AG04449 (cell line): ENCODE measurements at regions of chr10 and their contacts with region 1.

Region 1: GRCh38 chr10:86399879-86400704 is 33.5 kb upstream of the GRID1 start:
- DNase-seq: peak; percentile 63
- H3K4me3 ChIP-seq: peak overlapping the region; percentile 69
- CTCF ChIP-seq: peak; percentile 98

Region 2: GRCh38 chr10:86217371-86218080 is 182.6 kb before region 1 on chr10:
- CTCF ChIA-PET with region 1: no interaction called
- POLR2A ChIA-PET with region 1: no interaction called
- DNase-seq: no peak
- H3K4me3 ChIP-seq: no peak overlapping the region
- CTCF ChIP-seq: no peak

Region 3: DNA sequence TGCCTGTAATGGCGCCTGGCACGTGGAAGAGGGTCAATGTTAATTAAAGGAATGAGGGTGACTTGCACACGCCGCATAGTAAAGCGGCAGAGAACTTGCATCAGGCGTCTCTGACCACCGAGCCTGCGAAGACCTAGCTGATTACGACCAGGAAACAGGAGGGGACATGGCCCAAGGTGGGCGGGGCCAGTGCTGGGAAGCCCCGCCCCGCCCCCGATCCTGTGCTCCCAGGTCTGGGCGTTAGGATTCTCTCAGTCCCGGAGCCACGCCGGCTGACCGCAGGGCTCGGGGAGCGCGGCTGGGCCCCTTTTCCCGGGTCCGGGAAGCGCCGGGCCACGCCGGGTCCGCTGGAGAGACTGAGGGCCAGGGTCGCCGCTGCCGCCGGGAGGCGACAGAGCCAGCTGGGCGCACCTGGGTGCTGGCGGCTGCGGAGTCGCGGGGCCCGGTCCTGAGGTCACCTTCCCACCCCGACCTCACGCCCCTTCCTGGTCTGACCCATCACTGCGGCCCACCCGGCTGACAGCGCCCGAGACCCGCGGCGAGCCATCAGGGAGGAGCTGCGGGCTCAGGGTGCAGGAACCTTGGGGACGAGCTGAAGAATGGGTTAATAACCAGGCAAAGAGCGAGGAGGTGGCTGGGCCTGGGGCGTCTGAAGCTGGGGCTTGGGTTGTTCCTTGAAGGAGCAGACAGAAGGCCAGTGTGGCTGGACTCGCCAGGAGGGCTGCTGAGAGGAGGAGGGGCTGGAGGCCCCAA is 10.5 kb before region 1 on chr10:
- CTCF ChIA-PET with region 1: interaction called, 24 read pairs
- POLR2A ChIA-PET with region 1: no interaction called
- DNase-seq: no peak
- H3K4me3 ChIP-seq: peak overlapping the region; percentile 36
- CTCF ChIP-seq: no peak

Region 4: DNA sequence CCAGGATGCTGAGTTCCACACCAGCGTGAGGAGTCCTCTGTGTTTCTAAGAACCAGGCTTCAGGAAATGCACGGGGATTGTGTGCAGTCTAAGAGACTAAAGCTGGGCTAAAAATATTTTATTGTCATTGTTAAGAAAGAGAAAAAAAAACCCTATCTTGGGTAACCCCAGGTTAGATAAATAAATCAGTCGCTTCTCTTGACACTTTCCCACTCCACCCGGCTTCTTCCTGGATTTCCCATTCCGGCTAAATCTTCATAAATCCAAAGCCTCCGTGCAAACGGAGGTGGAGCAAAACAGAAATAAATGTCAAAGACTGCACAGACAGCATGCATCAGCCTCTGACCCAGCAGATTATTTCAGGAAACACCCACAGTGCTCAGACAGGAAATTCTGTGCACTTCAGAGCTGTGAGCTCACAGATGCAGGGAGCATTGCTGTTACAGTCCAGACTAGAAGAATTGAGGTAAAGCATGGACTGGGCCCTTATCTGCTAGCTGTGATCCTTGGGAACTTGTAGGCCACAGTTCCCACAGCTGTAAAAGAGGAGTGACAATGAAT is 11.3 kb after region 1 on chr10:
- CTCF ChIA-PET with region 1: interaction called, 24 read pairs
- POLR2A ChIA-PET with region 1: interaction called, 15 read pairs
- DNase-seq: peak; percentile 61
- H3K4me3 ChIP-seq: no peak overlapping the region; the same call in 1 of the 2 replicates
- CTCF ChIP-seq: no peak

Region 5: DNA sequence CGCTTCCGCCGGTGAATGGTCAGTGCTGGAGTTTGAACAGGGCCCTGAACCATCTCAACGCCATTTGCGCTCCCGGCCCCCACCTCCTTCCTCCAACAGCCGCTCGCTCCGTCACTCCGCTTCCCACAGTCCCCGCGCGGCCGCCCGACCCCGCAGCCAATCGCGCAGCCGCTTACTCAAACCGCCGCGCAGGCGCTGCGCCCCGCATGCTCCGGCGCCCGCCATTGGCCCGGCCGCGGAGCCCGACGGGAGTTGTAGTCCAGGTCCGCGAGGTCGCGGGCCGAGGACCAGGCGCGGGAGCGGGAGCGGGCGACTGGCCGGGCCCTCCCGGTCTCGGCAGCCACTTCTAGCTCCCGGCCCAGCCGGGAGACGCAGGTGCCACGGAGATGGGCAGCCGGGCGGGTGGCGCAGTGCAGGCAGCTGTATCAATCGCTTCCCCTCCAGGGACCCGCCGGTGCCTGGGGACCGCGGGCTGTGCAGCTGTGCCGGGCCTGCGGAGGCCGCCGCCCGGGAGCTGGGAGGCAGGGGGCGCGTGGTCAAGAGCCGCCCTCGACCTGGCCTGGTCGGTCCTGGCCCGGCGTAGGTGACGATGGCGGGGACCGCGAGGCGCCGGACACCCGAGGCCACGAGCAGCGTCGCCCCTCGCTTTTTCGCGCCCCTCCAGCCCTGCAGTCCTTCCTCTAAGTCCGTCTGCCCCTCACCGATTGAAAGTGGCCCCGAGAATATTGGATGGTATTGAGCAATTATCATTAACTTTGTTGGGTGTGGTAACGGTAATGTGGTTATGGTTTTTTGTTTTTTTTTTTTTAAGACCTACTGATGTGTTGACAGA is 121.8 kb after region 1 on chr10 and contains the start of gene WAPL:
- CTCF ChIA-PET with region 1: interaction called, 11 read pairs
- POLR2A ChIA-PET with region 1: interaction called, 5 read pairs
- DNase-seq: peak; percentile 19
- H3K4me3 ChIP-seq: peak within 1 kb of the TSS; percentile 80
- CTCF ChIP-seq: peak; percentile 6

Region 6: DNA sequence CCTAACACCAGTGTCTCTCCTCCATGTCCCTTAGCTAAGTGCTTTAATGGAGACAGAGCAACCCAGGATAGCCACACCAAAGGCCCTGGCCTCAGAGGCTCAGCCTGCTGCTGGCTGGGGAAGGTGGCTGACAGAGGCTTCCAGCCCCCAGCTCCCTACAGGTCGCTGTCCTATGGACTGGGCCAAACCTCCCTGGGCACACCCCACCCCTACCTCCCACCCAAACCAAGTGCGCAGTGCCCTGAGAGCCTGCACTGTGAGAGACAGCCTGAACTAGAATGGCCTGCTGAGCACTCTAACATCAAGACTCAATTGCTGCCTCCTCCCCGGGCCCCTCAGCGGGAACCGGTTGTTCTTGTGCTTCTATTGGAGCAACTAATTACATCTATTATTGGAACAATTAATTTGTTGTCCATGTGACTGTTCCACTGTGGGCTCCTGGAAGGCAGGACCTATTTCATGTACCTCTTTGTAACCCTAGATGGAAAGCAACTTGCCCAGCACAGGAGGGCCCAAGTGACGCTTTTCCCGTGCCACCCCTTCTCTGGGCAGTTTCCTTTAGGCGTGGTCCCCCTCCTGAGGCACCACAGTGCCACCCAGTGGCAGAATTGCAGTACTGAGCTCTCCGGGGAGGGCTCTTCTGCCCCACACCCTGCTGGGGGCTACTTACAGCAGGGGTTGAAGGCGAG is 185.1 kb after region 1 on chr10:
- CTCF ChIA-PET with region 1: interaction called, 120 read pairs
- POLR2A ChIA-PET with region 1: no interaction called
- DNase-seq: no peak
- H3K4me3 ChIP-seq: no peak overlapping the region
- CTCF ChIP-seq: peak; percentile 94